Ovary (tissue), 10 donors: ENCODE measurements at regions of chr18 and their contacts with region 1.

Region 1: DNA sequence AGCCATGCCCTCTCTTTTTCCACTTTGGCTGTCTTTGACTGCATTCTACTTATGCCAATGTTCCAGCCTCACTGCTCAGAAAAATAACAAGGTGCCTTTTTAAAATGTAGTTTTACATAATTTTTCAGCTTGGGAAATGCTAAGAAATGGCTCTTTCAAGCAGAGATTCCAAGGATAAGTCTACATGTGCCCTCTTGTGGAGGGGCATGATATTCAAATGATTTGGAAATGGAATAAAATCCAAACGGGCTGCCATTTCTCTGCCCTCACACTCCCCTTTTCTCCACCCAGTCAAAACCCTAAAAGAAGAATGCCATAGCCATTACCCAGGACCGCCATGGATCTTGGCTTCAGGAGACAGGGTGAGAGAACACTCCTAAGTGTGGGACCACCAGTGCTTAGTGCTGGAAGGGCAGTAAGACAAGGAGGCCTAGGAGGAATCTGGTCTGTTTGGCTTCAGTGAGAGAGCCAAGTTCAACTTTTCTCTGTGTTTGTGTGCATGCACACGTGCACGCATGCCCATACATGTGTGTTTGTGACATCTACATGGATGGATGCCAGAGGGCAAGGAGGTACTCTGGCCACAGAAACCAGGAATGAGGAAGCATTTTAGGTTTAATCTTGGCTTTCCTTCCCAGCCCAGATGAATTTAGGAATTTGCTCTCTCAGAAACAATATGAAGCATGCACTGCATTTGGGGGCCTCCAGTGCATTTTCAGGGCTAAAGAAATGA is 174.0 kb upstream of the SLC14A2 start:
- DNase-seq: no peak
- H3K4me3 ChIP-seq: no peak overlapping the region
- H3K27ac ChIP-seq: no peak overlapping the region
- H3K4me1 ChIP-seq: no peaks in the 10 kb centered on the region
- H3K27me3 ChIP-seq: no peaks in the 10 kb centered on the region
- CTCF ChIP-seq: no peak
- EP300 ChIP-seq: no peak
- POLR2A ChIP-seq: no peak

Region 2: DNA sequence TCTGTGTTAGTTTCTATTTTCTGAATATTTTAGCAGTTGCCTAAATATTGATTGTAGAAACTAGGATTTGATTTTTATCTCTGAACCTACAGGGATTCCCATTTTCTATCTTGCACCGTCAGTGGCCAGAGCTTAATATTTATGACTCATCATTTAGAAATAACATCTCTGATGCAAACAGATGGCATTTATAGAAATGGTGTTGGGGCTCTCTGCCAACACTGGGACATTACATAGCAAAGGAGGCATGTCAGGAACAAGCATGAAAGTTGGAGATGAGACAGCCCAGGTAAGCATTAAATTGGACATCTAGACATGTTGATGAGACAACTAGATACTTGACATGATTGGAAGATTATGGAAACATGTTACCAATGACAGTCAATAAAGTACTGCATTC is 1998.7 kb before region 1 on chr18:
- intact Hi-C with region 1: loop called in 1 of 4 experiments (anchors 10 kb)
- DNase-seq: no peak
- H3K4me3 ChIP-seq: no peak overlapping the region
- H3K27ac ChIP-seq: no peak overlapping the region
- H3K4me1 ChIP-seq: no peaks in the 10 kb centered on the region
- H3K27me3 ChIP-seq: no peaks in the 10 kb centered on the region
- CTCF ChIP-seq: no peak
- EP300 ChIP-seq: no peak
- POLR2A ChIP-seq: no peak

Region 3: DNA sequence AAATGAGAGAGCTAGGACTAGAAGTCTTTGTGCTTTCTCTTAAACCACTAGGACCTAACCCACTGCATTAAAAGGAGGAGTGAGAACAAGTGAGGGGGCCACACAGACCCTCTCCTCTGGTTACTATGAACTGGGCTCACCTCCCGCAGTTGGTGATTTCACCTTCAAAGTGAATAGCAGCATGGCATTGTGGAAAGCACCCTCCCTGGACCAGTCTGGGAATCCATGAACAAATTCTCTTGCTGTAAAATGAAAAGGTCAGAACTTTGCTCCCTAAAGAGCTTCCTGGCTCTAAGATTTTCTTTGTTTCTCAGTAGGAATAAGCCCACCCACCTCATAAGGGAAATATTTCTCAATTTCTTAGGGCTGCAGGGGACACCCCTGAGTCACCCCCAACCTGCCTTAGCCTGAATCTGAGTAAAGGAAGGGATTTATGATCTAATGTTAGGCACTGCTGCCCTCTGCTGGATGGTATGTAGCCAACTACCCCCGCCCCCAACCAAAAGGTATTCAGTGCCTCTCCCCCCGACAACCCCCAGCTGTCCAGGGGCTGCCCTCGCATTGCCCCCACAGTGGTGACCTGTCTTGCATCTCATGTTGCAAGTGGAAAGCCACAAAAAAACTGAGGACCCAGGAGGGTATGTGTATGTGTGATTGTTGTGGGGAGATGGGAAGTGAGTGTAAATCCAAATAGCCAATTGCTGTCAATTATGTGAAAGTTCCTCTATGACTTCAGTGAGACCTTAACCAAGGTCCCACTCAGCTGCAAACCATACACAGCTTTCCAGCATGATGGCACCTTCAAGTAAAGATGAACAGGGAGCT is 56.9 kb before region 1 on chr18:
- intact Hi-C with region 1: no loop called
- DNase-seq: peak in 4 of 5 donors; percentile 43 to 71 (median 55)
- H3K4me3 ChIP-seq: no peak overlapping the region
- H3K27ac ChIP-seq: no peak overlapping the region
- H3K4me1 ChIP-seq: no peaks in the 10 kb centered on the region
- H3K27me3 ChIP-seq: no peaks in the 10 kb centered on the region
- CTCF ChIP-seq: peak; percentile 24 to 48 (median 41)
- EP300 ChIP-seq: no peak
- POLR2A ChIP-seq: no peak